ENCODE measurements at regions of chr2 and their contacts with region 1.

Region 1: GRCh38 chr2:76506538-76506937 is 795.8 kb upstream of the GCFC2 start:
- DNase-seq: no peak
- ATAC-seq: no peak
- H3K4me3 ChIP-seq: no peak overlapping the region
- H3K4me3 Mint-ChIP-seq: no peak overlapping the region
- H3K27ac ChIP-seq: no peak overlapping the region
- H3K27ac Mint-ChIP-seq: no peak overlapping the region
- H3K4me1 ChIP-seq: no peaks in the 10 kb centered on the region
- H3K4me1 Mint-ChIP-seq: no peaks in the 10 kb centered on the region
- H3K27me3 ChIP-seq: no peaks in the 10 kb centered on the region
- H3K27me3 Mint-ChIP-seq: no peaks in the 10 kb centered on the region
- CTCF ChIP-seq: no peak

Region 2: GRCh38 chr2:75787532-75788132 is 718.9 kb before region 1 on chr2:
- CTCF ChIA-PET with region 1: no interaction called
- POLR2A ChIA-PET with region 1: no interaction called
- intact Hi-C with region 1: no loop called
- DNase-seq: peak in 1 of 9 experiments; percentile 8
- ATAC-seq: no peak
- H3K4me3 ChIP-seq: no peak overlapping the region
- H3K4me3 Mint-ChIP-seq: no peak overlapping the region
- H3K27ac ChIP-seq: no peak overlapping the region
- H3K27ac Mint-ChIP-seq: no peak overlapping the region
- H3K4me1 ChIP-seq: no peaks in the 10 kb centered on the region
- H3K4me1 Mint-ChIP-seq: no peaks in the 10 kb centered on the region
- H3K27me3 ChIP-seq: no peaks in the 10 kb centered on the region
- H3K27me3 Mint-ChIP-seq: peaks cover 11% of the 10 kb centered on the region
- CTCF ChIP-seq: peak; percentile 30

Region 3: GRCh38 chr2:76731157-76731556 is 224.6 kb after region 1 on chr2:
- CTCF ChIA-PET with region 1: no interaction called
- POLR2A ChIA-PET with region 1: no interaction called
- intact Hi-C with region 1: no loop called
- DNase-seq: no peak
- ATAC-seq: no peak
- H3K4me3 ChIP-seq: no peak overlapping the region
- H3K4me3 Mint-ChIP-seq: no peak overlapping the region
- H3K27ac ChIP-seq: no peak overlapping the region
- H3K27ac Mint-ChIP-seq: no peak overlapping the region
- H3K4me1 ChIP-seq: no peaks in the 10 kb centered on the region
- H3K4me1 Mint-ChIP-seq: no peaks in the 10 kb centered on the region
- H3K27me3 ChIP-seq: no peaks in the 10 kb centered on the region
- H3K27me3 Mint-ChIP-seq: no peaks in the 10 kb centered on the region
- CTCF ChIP-seq: no peak

Region 4: DNA sequence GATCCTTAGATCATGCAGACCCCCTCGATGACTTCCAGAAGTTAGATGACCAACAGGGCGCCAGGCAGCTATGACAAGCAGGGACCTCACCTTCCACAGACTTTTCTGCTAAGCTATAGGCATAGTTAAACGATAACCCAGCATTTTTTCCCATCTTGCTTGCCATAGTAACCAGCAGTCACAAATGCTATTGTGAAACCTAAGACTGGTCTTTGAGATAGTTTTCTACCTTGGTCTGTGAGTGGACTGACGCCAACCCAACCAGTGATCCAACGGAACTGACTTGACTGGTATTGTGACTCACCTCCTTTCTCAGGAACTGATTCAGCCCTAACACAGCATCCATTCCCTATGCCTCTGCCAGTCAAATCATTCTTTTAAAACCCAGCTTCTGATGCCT is 654.5 kb after region 1 on chr2:
- CTCF ChIA-PET with region 1: no interaction called
- POLR2A ChIA-PET with region 1: no interaction called
- intact Hi-C with region 1: loop called in 1 of 2 experiments (anchors 10 kb)
- DNase-seq: no peak
- ATAC-seq: no peak
- H3K4me3 ChIP-seq: no peak overlapping the region
- H3K4me3 Mint-ChIP-seq: no peak overlapping the region
- H3K27ac ChIP-seq: no peak overlapping the region
- H3K27ac Mint-ChIP-seq: no peak overlapping the region
- H3K4me1 ChIP-seq: no peaks in the 10 kb centered on the region
- H3K4me1 Mint-ChIP-seq: no peaks in the 10 kb centered on the region
- H3K27me3 ChIP-seq: no peaks in the 10 kb centered on the region
- H3K27me3 Mint-ChIP-seq: no peaks in the 10 kb centered on the region
- CTCF ChIP-seq: no peak